GM10248 (cell line): ENCODE measurements at regions of chr15 and their contacts with region 1.

Region 1: GRCh38 chr15:68252925-68253534 is 23.5 kb upstream of the CLN6 start:
- DNase-seq: peak; percentile 68
- CTCF ChIP-seq: peak; percentile 80

Region 2: DNA sequence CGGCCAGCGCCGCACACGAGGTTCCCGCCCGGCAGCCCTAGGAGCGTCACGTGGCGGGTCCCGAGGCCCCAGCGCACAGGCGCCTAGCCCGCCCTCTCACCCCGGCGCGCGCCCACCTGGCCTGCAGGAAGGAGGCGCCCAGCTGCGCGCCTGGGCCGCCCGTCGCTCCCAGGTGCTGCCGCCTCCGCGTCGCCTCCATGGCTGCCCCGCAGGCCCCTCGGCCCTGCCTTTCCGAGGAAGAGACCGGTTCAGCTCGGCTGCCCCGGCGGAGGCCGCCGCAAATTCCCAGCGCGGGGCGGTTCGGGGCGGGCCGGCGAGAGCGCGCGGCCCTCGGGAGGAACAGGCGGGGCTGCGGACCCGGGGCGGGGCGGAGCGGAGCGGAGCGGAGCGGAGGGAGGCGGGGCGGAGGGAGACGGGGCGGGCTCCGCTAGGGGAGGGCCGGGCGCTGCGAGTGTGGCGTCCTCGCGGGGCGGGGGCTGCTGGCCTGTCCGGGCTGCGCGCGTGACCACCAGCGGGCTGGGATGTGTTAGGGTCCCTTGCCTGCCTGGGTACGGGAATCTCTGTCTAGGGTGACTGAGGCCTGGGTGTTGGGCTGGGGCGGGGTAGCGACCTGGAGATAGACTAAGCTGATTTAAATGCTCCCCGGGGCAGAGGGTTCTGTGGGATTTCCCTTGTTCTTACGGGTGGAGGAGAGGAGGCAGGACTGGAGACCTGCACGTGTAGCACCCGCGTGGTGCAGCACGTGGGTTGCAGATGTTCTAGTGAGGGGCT is 23.5 kb before region 1 on chr15 and contains the start of gene CLN6:
- CTCF ChIA-PET with region 1: interaction called, 25 read pairs
- POLR2A ChIA-PET with region 1: no interaction called
- DNase-seq: peak; percentile 95
- CTCF ChIP-seq: no peak

Region 3: GRCh38 chr15:68241088-68241935 is 11.7 kb before region 1 on chr15:
- CTCF ChIA-PET with region 1: interaction called, 13 read pairs
- POLR2A ChIA-PET with region 1: no interaction called
- DNase-seq: no peak
- CTCF ChIP-seq: no peak

Region 4: GRCh38 chr15:68265081-68265480 is 12.1 kb after region 1 on chr15:
- CTCF ChIA-PET with region 1: interaction called, 16 read pairs
- POLR2A ChIA-PET with region 1: no interaction called
- DNase-seq: no peak
- CTCF ChIP-seq: no peak

Region 5: DNA sequence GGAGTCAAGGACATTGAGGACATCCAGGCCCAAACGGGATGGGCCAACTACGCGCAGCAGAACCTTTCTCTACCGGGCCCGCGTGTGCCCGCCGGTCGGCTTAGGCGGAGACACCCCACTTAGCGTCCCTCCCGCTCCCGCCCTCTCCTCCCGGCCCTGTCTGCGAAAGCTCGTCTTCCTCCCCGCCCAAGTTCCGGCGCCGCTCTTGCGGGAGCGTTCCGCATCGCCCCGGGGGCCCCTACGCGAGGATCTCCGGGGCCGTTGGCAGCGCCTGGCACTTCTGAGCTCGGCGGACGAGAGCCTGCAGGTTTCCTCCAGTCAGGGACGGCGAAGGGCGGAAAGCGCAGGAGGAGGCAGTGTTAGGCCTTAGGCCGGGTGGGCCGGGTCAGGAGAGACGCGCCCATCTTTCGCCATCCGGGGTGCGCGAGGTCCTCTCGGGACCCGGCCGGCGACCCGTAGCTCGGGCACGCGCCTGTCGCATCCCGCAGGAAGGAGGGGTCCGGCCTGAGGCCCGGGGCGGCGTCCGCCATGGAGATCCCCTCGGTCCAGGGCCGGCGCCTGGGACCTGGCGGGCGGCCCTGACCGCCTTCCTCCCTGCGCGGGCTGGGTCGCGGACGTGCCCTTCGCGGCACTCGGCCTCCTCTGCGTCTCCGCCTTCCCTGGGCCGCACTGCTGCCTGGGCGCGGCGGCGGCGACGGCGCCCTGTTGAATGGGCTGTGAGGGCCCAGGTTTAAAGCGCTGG is 24.7 kb after region 1 on chr15 and contains the start of gene FEM1B:
- CTCF ChIA-PET with region 1: interaction called, 18 read pairs
- POLR2A ChIA-PET with region 1: interaction called, 3 read pairs
- DNase-seq: peak; percentile 92
- CTCF ChIP-seq: no peak

Region 6: DNA sequence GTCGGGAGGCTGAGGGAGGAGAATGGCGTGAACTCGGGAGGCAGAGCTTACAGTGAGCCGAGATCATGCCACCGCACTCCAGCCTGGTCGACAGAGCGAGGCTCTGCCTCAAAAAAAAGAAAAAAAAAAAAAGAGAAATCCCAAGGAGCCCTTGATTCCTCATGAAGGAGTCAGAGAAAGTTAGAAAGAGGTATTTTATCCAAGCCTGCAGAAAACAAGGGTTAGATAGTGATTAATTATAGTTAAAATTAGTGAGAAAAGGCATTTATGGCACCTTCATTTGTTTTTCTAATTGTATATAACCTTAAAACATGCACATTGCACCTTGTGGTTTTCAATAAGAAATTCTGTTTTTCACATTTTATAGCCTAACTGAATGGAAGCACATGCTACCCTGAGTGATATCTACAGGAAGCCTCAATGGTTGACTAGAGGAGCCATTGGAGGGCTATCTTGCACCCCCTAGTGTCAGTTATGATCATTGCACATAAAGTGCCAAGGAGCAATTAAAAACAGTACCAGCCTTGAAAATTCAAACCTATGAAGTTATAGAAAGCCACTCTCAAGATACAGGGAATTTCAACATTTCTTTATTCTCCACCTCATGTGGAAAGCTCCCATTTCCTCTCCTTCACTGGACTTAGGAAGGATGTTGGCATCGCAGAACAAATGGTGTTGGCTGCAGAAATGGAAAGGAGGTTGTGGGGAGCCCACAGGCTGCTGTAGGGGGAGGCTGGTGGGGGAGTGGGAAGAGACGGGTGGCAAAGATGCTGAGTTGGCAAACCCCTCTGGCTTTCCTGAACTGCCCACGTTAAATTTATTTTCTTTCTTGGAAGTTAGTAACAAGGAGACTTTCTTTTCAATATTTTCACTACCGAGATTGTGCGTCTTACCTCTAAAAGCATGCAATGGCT is 130.4 kb after region 1 on chr15:
- CTCF ChIA-PET with region 1: interaction called, 10 read pairs
- POLR2A ChIA-PET with region 1: no interaction called
- DNase-seq: peak; percentile 81
- CTCF ChIP-seq: peak; percentile 34